ENCODE measurements at regions of chr21 and their contacts with region 1.

Region 1: GRCh38 chr21:26769613-26770188 is 75.5 kb downstream of the ADAMTS1 start:
- DNase-seq: no peak
- ATAC-seq: peak in 1 of 4 donors; percentile 49
- H3K4me3 ChIP-seq: no peak overlapping the region
- H3K27ac ChIP-seq: no peak overlapping the region
- H3K4me1 ChIP-seq: no peaks in the 10 kb centered on the region
- H3K27me3 ChIP-seq: no peaks in the 10 kb centered on the region
- CTCF ChIP-seq: peak; percentile 67

Region 2: GRCh38 chr21:26834181-26834945 is 64.7 kb after region 1 on chr21:
- intact Hi-C with region 1: loop called in 1 of 2 experiments (anchors 10 kb)
- DNase-seq: no peak
- ATAC-seq: peak in 3 of 4 donors; percentile 21 to 42 (median 26)
- H3K4me3 ChIP-seq: no peak overlapping the region
- H3K27ac ChIP-seq: no peak overlapping the region
- H3K4me1 ChIP-seq: peaks cover 15% of the 10 kb centered on the region
- H3K27me3 ChIP-seq: no peaks in the 10 kb centered on the region
- CTCF ChIP-seq: peak; percentile 26